Activated T-helper 2 cell treated with anti-CD3 and anti-CD28 coated beads, Interferon-gamma antibody, Interleukin-2, Interleukin-4, amounts not matched to agents 10 μg/mL and 5 μg/mL and 100 μg/mL, durations not matched to agents 14 hours and 24 hours and 36 hours (primary cell): ENCODE measurements at regions of chr19 and their contacts with region 1.

Region 1: DNA sequence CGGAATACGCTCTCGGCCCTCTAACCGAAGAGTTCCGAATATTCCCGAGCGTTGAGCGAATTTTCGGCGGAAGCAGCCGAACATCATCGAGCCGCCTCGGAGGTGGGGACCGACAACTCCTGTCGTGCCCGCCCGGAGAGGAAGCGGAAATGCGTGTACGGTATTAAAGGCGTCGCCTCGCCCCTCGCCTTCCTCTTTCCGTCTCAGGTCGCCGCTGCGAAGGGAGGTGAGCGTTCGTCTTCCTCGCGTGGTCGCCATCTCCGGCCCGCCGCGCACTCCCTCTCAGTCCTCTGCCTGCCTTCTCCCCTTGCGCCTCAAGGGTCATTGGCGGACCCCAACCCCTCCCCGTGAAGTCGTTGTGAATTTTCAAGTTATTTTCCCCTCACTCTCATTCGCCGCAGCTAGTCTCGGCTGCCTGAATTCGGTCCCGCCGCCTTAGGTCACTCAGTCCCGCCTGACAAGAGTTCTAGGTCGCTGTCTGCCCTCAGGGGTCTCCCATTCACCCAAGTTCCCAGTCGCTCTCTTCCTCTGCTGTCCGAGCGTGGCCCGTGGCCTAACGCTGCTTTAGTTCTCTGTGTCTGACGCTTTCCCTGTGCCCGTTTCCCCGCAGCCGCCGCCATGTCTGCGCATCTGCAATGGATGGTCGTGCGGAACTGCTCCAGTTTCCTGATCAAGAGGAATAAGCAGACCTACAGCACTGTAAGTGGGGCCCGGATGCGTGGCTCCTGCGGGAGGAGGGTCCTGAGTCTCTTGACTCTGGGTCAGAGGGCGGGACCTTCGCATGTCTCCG is at the start of gene RPL28:
- DNase-seq: peak; percentile 99
- H3K4me3 Mint-ChIP-seq: peak within 1 kb of the TSS; percentile 100
- H3K27ac Mint-ChIP-seq: peak within 1 kb of the TSS; percentile 94
- H3K4me1 Mint-ChIP-seq: peaks cover 44% of the 10 kb centered on the region
- H3K27me3 Mint-ChIP-seq: no peaks in the 10 kb centered on the region
- total RNA-seq, gene RPL28: 2,206 and 2,207 TPM in 2 replicates

Region 2: DNA sequence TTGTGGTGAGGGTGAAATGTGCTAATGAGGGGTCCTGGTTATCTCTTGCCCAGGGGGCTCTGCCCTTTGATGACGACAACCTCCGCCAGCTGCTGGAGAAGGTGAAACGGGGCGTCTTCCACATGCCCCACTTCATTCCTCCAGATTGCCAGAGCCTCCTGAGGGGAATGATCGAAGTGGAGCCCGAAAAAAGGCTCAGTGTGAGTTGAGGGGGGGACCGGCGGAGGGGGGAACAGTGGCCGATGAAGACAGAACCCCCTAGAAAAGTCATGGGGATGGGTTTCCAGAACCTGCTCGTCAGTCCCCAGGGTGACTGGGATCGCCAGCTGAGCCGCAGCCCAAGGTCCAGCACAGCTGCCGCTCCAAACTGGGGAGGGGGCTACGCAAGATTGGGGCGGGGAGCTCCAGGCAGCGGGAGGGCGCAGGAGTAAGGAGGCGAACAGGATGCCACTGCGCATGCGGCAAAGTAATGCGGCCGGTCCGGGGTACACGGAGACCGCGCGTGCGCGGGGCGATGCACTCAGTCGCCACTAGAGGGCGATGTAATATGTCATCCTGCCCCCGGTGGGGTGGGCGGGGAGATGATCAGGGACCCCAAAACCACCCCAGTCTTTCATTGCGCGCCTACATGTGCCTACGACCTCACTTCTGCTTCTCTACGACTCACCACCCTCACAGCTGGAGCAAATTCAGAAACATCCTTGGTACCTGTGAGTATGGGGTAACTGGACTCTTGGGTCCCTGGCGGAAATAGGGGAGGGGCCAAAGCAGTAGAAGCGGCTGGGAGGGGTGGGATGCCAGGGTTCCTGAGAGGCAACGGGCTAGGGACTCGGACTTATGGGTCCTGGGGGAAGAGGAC is 84.2 kb before region 1 on chr19:
- intact Hi-C with region 1: loop called (anchors 5 kb)
- DNase-seq: peak; percentile 91
- H3K4me3 Mint-ChIP-seq: peak overlapping the region; percentile 81
- H3K27ac Mint-ChIP-seq: peak overlapping the region; percentile 75
- H3K4me1 Mint-ChIP-seq: peaks cover 4% of the 10 kb centered on the region
- H3K27me3 Mint-ChIP-seq: no peaks in the 10 kb centered on the region

Region 3: DNA sequence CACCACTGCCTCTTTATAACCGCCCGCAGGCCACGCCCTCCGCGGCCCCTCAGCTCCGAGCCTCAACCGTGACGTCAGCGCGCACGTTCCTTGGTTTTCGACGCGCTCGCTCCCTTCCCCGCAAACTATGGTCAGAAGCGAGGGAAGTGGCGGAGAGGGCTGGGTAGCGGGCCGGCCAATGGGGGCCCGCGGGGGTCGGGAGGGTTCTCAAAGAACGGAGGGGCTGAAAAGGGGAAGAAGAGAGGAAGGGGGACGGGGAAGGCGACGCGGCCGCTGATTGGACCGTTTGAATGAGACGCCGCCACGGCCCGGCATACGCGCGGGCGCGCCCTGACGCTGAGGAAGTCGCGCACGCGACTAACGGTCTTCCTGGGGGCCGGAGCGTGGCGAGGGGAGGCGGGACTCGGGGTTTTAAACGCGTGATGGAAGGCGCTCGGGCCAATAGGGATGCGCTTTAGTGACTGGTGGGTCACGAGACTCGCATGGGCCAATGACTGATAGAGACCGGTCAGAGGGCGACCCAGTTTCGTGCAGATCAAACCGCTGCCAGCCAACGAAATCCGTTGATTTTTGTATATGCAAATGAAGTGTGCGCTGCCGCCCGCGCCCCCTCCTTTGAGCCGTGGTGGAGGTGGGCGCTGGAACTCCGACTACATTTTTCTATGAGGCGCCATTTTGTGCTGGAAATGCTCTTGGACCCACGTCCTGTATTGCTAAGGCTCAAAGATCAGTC is 22.0 kb after region 1 on chr19:
- intact Hi-C with region 1: loop called (anchors 2 kb)
- DNase-seq: peak; percentile 98
- H3K4me3 Mint-ChIP-seq: peak overlapping the region; percentile 93
- H3K27ac Mint-ChIP-seq: peak overlapping the region; percentile 97
- H3K4me1 Mint-ChIP-seq: peaks cover 22% of the 10 kb centered on the region
- H3K27me3 Mint-ChIP-seq: peaks cover 4% of the 10 kb centered on the region

Region 4: DNA sequence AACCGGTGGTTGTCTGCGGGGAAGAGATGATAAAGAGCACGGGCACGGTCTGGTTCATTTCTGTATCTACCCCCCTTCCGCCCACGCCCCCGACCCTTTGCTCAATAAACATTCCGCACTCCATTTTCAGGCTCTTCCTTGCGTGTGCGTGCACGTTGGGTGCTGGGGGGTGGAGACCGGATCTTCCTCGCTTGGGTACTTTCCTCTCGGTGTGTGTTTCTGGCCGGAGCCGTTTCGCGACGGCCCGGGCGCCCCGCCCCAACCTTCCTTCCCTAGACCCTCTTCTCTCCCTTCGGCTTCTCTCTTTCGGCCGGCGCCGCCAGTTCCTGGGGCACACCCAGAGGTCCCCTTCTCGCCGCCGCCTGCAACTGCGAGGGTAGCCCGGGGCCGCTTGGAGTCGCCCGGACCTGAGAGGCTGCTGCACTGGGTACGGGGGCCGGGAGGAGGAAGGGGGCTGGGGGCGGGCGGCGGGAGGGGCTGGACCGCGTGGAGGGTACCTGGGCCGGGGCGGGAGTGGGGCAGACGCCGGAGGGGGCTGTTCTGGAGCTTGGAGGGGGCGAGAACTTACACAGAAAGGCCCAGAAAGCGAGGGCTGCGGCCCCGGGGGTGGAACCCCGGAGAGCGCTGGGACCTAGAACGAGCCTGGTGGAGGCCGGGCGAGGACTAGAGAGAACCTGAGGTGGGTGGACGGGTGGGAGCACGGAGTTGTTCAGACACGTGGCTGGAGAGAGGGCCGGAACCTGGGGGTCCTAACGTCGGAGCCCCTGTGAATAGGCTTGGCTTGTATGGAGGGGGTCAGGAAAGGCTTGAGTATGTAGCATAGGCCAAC is 257.6 kb after region 1 on chr19 and contains the start of gene ZNF581:
- intact Hi-C with region 1: loop called (anchors 5 kb)
- DNase-seq: peak; percentile 77
- H3K4me3 Mint-ChIP-seq: peak within 1 kb of the TSS; percentile 99
- H3K27ac Mint-ChIP-seq: peak within 1 kb of the TSS; percentile 97
- H3K4me1 Mint-ChIP-seq: peaks cover 36% of the 10 kb centered on the region
- H3K27me3 Mint-ChIP-seq: no peaks in the 10 kb centered on the region
- total RNA-seq, gene ZNF581: 26.6 and 27.0 TPM in 2 replicates